B cell (primary cell): ENCODE measurements at regions of chr18 and their contacts with region 1.

Region 1: GRCh38 chr18:25310045-25310444 is 41.9 kb downstream of the ZNF521 start:
- DNase-seq: no peak
- ATAC-seq: no peak
- H3K4me3 ChIP-seq: no peak overlapping the region
- H3K4me3 Mint-ChIP-seq: no peak overlapping the region
- H3K27ac ChIP-seq: no peak overlapping the region
- H3K27ac Mint-ChIP-seq: no peak overlapping the region
- H3K4me1 ChIP-seq: no peaks in the 10 kb centered on the region
- H3K4me1 Mint-ChIP-seq: no peaks in the 10 kb centered on the region
- H3K27me3 ChIP-seq: no peaks in the 10 kb centered on the region
- H3K27me3 Mint-ChIP-seq: peaks cover 5% of the 10 kb centered on the region
- CTCF ChIP-seq: no peak

Region 2: DNA sequence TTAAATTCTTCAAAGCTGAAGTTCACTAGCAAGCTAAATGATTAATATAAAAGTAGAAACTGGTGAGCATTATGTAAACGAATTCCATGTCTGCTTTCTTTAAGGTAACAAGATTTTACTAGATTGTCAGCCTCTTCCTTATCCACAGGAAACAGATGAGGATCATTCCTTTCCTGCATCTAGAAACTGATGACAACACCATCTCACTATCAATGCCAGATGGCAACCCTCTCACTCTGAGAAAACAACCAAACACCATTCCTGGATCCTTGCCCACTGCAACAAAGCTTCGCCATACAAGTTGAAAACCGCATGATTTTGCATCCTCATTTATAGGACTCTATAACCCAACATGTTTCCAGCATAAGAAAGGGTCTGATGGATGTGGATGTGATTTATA is 81.0 kb before region 1 on chr18:
- CTCF ChIA-PET with region 1: no interaction called
- POLR2A ChIA-PET with region 1: no interaction called
- intact Hi-C with region 1: no loop called
- DNase-seq: no peak
- ATAC-seq: no peak
- H3K4me3 ChIP-seq: no peak overlapping the region
- H3K4me3 Mint-ChIP-seq: no peak overlapping the region
- H3K27ac ChIP-seq: no peak overlapping the region
- H3K27ac Mint-ChIP-seq: no peak overlapping the region
- H3K4me1 ChIP-seq: no peaks in the 10 kb centered on the region
- H3K4me1 Mint-ChIP-seq: peaks cover 1% of the 10 kb centered on the region
- H3K27me3 ChIP-seq: peaks cover 0 to 2% (median 0%) of the 10 kb centered on the region in 4 experiments
- H3K27me3 Mint-ChIP-seq: no peaks in the 10 kb centered on the region
- CTCF ChIP-seq: no peak

Region 3: GRCh38 chr18:25334588-25334987 is 24.5 kb after region 1 on chr18:
- CTCF ChIA-PET with region 1: no interaction called
- POLR2A ChIA-PET with region 1: no interaction called
- intact Hi-C with region 1: no loop called
- DNase-seq: no peak
- ATAC-seq: no peak
- H3K4me3 ChIP-seq: no peak overlapping the region
- H3K4me3 Mint-ChIP-seq: no peak overlapping the region
- H3K27ac ChIP-seq: no peak overlapping the region
- H3K27ac Mint-ChIP-seq: no peak overlapping the region
- H3K4me1 ChIP-seq: no peaks in the 10 kb centered on the region
- H3K4me1 Mint-ChIP-seq: no peaks in the 10 kb centered on the region
- H3K27me3 ChIP-seq: peaks cover 0 to 3% (median 0%) of the 10 kb centered on the region in 4 experiments
- H3K27me3 Mint-ChIP-seq: peaks cover 31% of the 10 kb centered on the region
- CTCF ChIP-seq: no peak

Region 4: DNA sequence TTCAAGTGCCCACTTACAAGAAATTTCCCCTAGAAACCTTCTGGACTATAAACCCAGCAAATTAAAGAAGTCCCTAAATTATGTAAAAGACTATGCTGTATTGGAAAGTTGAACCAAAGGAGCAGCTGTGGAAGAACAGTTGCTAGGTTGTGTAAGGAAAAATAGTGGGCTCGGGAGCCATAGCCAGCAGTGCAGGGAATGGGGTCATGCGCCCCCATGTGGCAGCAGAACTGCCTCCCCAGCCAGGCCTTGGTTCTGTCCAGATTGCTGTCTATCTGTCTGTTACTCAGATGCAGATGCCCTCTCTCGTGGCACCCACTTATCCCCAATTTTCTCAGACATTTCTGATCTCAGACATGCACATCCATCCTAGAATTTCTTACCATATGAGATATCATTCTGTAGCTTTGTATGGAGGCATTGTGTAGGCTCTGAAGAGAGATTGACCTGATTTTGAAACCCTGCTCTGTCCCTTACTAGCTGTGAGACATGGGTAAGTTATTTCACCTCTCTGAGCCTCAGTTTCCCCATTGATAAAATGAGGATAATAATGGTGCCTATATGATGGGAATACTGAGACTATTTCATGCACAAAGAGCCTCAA is 522.1 kb after region 1 on chr18:
- CTCF ChIA-PET with region 1: no interaction called
- POLR2A ChIA-PET with region 1: no interaction called
- intact Hi-C with region 1: loop called (anchors 5 kb)
- DNase-seq: peak; percentile 12
- ATAC-seq: no peak
- H3K4me3 ChIP-seq: no peak overlapping the region
- H3K4me3 Mint-ChIP-seq: no peak overlapping the region
- H3K27ac ChIP-seq: no peak overlapping the region
- H3K27ac Mint-ChIP-seq: no peak overlapping the region
- H3K4me1 ChIP-seq: no peaks in the 10 kb centered on the region
- H3K4me1 Mint-ChIP-seq: no peaks in the 10 kb centered on the region
- H3K27me3 ChIP-seq: no peaks in the 10 kb centered on the region
- H3K27me3 Mint-ChIP-seq: peaks cover 12% of the 10 kb centered on the region
- CTCF ChIP-seq: peak; percentile 45

Region 5: GRCh38 chr18:25896178-25896780 is 586.2 kb after region 1 on chr18:
- CTCF ChIA-PET with region 1: interaction called, 5 read pairs
- POLR2A ChIA-PET with region 1: no interaction called
- intact Hi-C with region 1: loop called (anchors 2 kb)
- DNase-seq: peak; percentile 28
- ATAC-seq: peak; percentile 47
- H3K4me3 ChIP-seq: no peak overlapping the region
- H3K4me3 Mint-ChIP-seq: no peak overlapping the region
- H3K27ac ChIP-seq: no peak overlapping the region
- H3K27ac Mint-ChIP-seq: no peak overlapping the region
- H3K4me1 ChIP-seq: no peaks in the 10 kb centered on the region
- H3K4me1 Mint-ChIP-seq: no peaks in the 10 kb centered on the region
- H3K27me3 ChIP-seq: no peaks in the 10 kb centered on the region
- H3K27me3 Mint-ChIP-seq: peaks cover 18% of the 10 kb centered on the region
- CTCF ChIP-seq: peak; percentile 85